ENCODE measurements at regions of chr18 and their contacts with region 1.

Region 1: GRCh38 chr18:3665780-3666525 is 216.0 kb downstream of the TGIF1 start:
- DNase-seq: peak; percentile 50 to 77 (median 59)
- H3K4me3 ChIP-seq: no peak overlapping the region
- H3K4me3 Mint-ChIP-seq: peak overlapping the region in 3 of 7 donors; percentile 38 to 57 (median 45)
- H3K27ac ChIP-seq: peak overlapping the region; percentile 34
- H3K27ac Mint-ChIP-seq: peak overlapping the region in 2 of 8 donors; percentile 43 to 60
- H3K4me1 ChIP-seq: peaks cover 9% of the 10 kb centered on the region
- H3K4me1 Mint-ChIP-seq: peaks cover 0 to 9% (median 3%) of the 10 kb centered on the region in 3 donors
- H3K27me3 ChIP-seq: no peaks in the 10 kb centered on the region
- H3K27me3 Mint-ChIP-seq: peaks cover 4 to 11% of the 10 kb centered on the region in 2 donors

Region 2: GRCh38 chr18:3093624-3094337 is 572.2 kb before region 1 on chr18:
- CTCF ChIA-PET with region 1: no interaction called
- POLR2A ChIA-PET with region 1: no interaction called
- DNase-seq: no peak
- H3K4me3 ChIP-seq: no peak overlapping the region
- H3K4me3 Mint-ChIP-seq: no peak overlapping the region
- H3K27ac ChIP-seq: no peak overlapping the region
- H3K27ac Mint-ChIP-seq: no peak overlapping the region
- H3K4me1 ChIP-seq: peaks cover 21% of the 10 kb centered on the region
- H3K4me1 Mint-ChIP-seq: peaks cover 18 to 21% (median 19%) of the 10 kb centered on the region in 3 donors
- H3K27me3 ChIP-seq: no peaks in the 10 kb centered on the region
- H3K27me3 Mint-ChIP-seq: no peaks in the 10 kb centered on the region

Region 3: DNA sequence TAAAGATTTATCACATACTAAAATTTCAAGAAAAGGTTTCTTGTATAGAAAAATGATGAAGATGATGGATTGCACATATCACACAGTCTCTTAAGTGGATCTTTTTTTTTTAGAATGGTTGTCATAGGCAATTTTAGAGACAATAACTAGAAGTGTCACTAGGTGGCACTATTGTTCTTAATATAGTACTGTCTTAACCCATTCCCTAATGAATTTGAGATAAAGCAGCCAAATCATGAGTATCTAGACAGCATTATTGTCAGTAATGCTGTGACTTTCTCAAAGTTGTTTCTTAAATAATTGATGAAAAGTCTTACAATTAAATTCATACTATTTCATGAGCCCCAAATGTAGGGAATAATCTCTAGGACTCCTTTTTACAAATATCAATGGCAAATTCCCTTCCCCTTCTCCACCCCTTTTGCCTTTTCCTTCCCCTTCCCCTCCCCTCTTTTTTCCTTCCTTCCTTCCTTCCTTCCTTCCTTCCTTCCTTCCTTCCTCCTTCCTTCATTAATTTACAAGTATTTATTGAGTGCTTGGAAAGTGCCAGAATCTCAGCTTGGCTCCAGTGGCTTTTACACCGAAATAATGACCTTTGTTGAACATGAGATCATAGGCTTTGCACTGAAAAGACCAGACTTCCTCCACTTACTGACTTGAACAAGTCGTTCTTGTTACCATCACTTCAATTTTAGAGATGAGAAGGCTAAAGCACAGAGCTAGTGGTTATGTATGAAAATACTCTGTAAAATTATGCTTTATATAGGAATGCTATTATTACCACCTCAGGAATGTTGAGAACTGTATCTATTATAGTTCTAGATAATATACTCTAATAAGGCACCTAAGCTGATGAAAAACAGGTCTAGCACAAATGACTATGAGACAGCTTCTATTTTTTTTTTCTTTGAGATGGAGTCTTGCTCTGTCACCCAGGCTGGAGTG is 384.2 kb before region 1 on chr18:
- CTCF ChIA-PET with region 1: interaction called, 113 read pairs
- POLR2A ChIA-PET with region 1: no interaction called
- DNase-seq: peak in 2 of 5 donors; percentile 63 to 66
- H3K4me3 ChIP-seq: no peak overlapping the region
- H3K4me3 Mint-ChIP-seq: no peak overlapping the region
- H3K27ac ChIP-seq: no peak overlapping the region
- H3K27ac Mint-ChIP-seq: no peak overlapping the region
- H3K4me1 ChIP-seq: no peaks in the 10 kb centered on the region
- H3K4me1 Mint-ChIP-seq: peaks cover 0 to 5% (median 0%) of the 10 kb centered on the region in 3 donors
- H3K27me3 ChIP-seq: no peaks in the 10 kb centered on the region
- H3K27me3 Mint-ChIP-seq: no peaks in the 10 kb centered on the region

Region 4: GRCh38 chr18:3321133-3321812 is 344.7 kb before region 1 on chr18:
- CTCF ChIA-PET with region 1: interaction called, 10 read pairs
- POLR2A ChIA-PET with region 1: no interaction called
- DNase-seq: no peak
- H3K4me3 ChIP-seq: no peak overlapping the region
- H3K4me3 Mint-ChIP-seq: no peak overlapping the region
- H3K27ac ChIP-seq: no peak overlapping the region
- H3K27ac Mint-ChIP-seq: no peak overlapping the region
- H3K4me1 ChIP-seq: no peaks in the 10 kb centered on the region
- H3K4me1 Mint-ChIP-seq: peaks cover 0 to 5% (median 0%) of the 10 kb centered on the region in 3 donors
- H3K27me3 ChIP-seq: no peaks in the 10 kb centered on the region
- H3K27me3 Mint-ChIP-seq: peaks cover 4 to 26% of the 10 kb centered on the region in 2 donors

Region 5: DNA sequence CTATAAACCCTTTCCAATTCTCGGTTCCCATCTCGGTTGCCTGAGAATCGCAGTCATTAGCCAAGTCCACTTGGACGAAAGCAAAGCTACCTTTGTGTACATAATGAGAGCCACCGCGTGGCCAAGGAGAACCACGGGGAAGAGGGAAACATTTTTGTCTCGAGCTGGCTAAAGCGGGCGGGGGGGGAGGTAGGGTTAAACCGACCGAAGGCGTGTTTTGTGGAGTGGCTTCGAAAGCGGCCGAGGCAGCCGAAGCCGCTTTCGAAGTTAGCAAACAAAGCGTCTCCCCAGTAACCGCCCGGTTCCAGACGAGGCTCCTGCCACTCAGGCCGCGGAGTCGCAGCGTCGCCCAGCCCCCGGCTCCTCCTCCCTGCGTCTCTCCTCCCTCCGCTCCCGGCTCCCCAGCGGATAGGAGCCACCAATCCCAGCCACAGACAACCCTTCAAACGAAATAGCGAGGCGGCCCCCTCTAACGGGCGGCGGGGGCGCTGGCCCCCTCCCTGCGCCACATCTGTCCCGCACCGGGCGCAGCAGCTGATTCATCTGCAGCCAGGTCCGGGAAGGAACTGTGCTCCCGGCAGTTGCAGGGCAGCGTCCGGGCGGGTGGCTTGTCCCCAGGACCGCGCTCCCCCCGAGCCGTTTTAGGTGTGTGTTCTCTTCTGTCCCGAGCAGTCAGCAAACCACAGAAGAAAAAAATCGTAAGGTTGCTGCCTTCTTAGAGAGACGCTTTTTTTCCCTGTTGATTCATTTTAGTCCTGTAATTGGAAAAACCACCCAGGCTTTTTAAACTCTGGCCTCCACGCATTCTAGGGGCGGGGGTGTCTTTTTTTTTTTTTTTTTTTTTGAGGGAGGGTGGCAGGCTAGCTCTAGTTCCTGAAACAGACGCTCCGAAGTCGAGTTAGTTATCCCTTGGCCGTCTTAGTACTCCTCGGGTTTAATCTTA is 217.8 kb before region 1 on chr18:
- CTCF ChIA-PET with region 1: interaction called, 35 read pairs
- POLR2A ChIA-PET with region 1: no interaction called
- DNase-seq: peak; percentile 77 to 94 (median 89)
- H3K4me3 ChIP-seq: peak overlapping the region; percentile 96
- H3K4me3 Mint-ChIP-seq: peak overlapping the region; percentile 85 to 98 (median 96)
- H3K27ac ChIP-seq: peak overlapping the region; percentile 94
- H3K27ac Mint-ChIP-seq: peak overlapping the region; percentile 93 to 100 (median 100)
- H3K4me1 ChIP-seq: peaks cover 16% of the 10 kb centered on the region
- H3K4me1 Mint-ChIP-seq: peaks cover 22 to 33% (median 31%) of the 10 kb centered on the region in 3 donors
- H3K27me3 ChIP-seq: no peaks in the 10 kb centered on the region
- H3K27me3 Mint-ChIP-seq: peaks cover 0 to 19% of the 10 kb centered on the region in 2 donors

Region 6: GRCh38 chr18:3593904-3594661 is 71.9 kb before region 1 on chr18:
- CTCF ChIA-PET with region 1: interaction called, 57 read pairs
- POLR2A ChIA-PET with region 1: interaction called, 8 read pairs
- DNase-seq: peak; percentile 77 to 95 (median 93)
- H3K4me3 ChIP-seq: peak overlapping the region; percentile 74
- H3K4me3 Mint-ChIP-seq: peak overlapping the region; percentile 94 to 98 (median 95)
- H3K27ac ChIP-seq: peak overlapping the region; percentile 95
- H3K27ac Mint-ChIP-seq: peak overlapping the region; percentile 97 to 100 (median 99)
- H3K4me1 ChIP-seq: peaks cover 41% of the 10 kb centered on the region
- H3K4me1 Mint-ChIP-seq: peaks cover 49 to 64% (median 54%) of the 10 kb centered on the region in 3 donors
- H3K27me3 ChIP-seq: no peaks in the 10 kb centered on the region
- H3K27me3 Mint-ChIP-seq: no peaks in the 10 kb centered on the region

Region 7: DNA sequence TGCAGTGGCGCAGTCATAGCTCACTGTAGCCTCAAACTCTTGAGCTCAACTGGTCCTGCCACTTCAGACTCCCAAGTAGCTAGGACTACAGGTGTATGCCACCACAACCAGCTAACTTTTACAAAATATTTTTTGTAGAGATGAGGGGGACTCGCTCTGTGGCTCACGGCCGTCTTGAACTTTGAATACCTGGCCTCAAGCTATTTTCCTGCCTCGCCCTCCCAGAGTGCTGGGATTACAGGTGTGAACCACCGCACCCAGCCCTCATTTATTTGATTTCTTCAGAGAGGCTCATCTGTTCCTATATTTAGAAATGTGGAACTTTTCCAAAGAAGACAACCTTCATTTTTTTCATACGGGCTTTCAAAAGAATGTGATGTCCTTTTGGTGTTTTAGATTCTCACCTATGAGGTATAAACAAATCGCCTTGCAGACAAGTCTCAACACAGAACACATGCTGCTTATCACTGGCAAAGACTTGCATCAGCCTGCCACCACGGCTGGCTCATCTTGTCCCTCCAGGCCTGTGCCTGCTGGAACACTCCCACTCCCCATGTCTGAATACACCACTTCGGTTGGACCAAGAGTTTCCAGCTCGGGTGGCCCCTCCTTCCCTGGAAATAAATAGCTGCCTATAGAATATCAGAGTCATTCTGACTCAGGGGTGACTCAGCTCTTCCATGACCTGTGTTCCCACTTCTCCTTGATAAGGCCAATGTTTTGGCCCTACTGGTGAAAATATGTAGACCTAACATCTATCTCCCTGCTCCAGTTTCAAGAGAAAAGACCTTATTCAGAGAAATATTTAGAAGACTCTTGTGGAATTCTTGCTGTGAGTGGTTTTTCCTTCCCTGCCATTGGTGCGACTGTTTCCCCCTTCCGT is 13.3 kb before region 1 on chr18:
- CTCF ChIA-PET with region 1: interaction called, 20 read pairs
- POLR2A ChIA-PET with region 1: no interaction called
- DNase-seq: no peak
- H3K4me3 ChIP-seq: no peak overlapping the region
- H3K4me3 Mint-ChIP-seq: no peak overlapping the region
- H3K27ac ChIP-seq: peak overlapping the region; percentile 97
- H3K27ac Mint-ChIP-seq: no peak overlapping the region
- H3K4me1 ChIP-seq: no peaks in the 10 kb centered on the region
- H3K4me1 Mint-ChIP-seq: peaks cover 0 to 5% (median 0%) of the 10 kb centered on the region in 3 donors
- H3K27me3 ChIP-seq: no peaks in the 10 kb centered on the region
- H3K27me3 Mint-ChIP-seq: peaks cover 0 to 2% of the 10 kb centered on the region in 2 donors